SK-N-SH (cell line): ENCODE measurements at regions of chr20 and their contacts with region 1.

Region 1: GRCh38 chr20:41095110-41095969 is 42.0 kb upstream of the PLCG1 start:
- DNase-seq: peak; percentile 58
- H3K4me3 ChIP-seq: no peak overlapping the region
- H3K27ac ChIP-seq: no peak overlapping the region
- H3K4me1 ChIP-seq: peaks cover 9 to 12% of the 10 kb centered on the region in 2 experiments
- H3K27me3 ChIP-seq: no peaks in the 10 kb centered on the region
- CTCF ChIP-seq: peak; percentile 96
- EP300 ChIP-seq: no peak
- RAD21 ChIP-seq: peak; percentile 89

Region 2: DNA sequence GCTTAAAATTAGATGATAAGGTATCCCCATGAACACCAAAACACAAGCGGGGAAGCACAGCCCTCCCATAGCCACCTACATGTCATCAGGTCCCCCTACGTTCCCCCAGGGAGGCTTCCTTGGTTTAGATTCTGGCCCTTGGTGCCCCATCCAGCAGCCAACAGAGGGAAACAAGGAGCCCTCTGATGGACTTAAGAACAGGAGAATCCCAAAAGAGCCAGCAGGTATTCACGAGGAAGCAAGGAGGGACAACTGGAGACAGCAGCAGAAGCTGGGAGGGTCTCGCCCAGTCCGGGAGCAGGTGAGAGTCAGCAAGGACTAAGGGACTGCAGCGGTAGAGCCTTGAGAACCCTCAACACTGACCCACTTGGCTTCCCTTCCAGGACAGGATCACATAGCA is 125.1 kb before region 1 on chr20:
- CTCF ChIA-PET with region 1: interaction called, 34 read pairs
- POLR2A ChIA-PET with region 1: no interaction called
- DNase-seq: no peak
- H3K4me3 ChIP-seq: no peak overlapping the region
- H3K27ac ChIP-seq: no peak overlapping the region
- H3K4me1 ChIP-seq: peaks cover 0 to 2% of the 10 kb centered on the region in 2 experiments; a peak in 1 of 4 replicates
- H3K27me3 ChIP-seq: no peaks in the 10 kb centered on the region
- CTCF ChIP-seq: no peak
- EP300 ChIP-seq: no peak
- RAD21 ChIP-seq: no peak

Region 3: GRCh38 chr20:40980106-40980827 is 115.1 kb before region 1 on chr20:
- CTCF ChIA-PET with region 1: interaction called, 17 read pairs
- POLR2A ChIA-PET with region 1: no interaction called
- DNase-seq: no peak
- H3K4me3 ChIP-seq: no peak overlapping the region
- H3K27ac ChIP-seq: no peak overlapping the region
- H3K4me1 ChIP-seq: no peaks in the 10 kb centered on the region
- H3K27me3 ChIP-seq: no peaks in the 10 kb centered on the region
- CTCF ChIP-seq: no peak
- EP300 ChIP-seq: no peak
- RAD21 ChIP-seq: no peak

Region 4: DNA sequence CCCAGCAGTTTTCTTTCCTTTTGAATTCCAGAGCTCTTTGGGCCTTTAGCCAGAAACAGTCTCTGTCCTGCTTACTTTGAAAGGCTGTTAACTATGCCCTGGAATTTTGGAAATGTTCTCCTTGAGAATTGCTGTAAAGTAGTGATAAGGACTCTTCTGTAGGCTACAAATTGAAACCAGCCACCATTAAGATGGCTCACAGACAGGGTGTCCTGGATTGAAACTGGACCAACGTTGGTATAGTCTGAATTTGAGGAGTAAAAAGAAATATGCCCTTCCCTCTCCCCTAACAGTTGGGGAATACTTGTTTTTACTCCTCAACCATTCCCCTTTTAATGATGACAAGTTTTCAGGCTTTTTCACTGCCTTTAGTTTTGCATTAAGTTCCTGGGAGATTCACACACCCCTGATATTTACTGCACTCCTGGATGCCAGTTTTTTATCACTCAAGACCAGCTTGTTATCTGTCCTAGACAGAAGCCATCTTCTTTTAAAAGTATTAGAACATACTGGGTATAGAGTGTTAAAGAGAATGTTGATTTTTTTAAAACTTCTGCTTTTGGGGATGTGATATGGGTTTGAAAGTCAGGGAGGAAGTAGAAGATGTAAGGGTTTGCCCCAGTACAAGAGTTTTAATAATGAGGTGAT is 44.9 kb before region 1 on chr20:
- CTCF ChIA-PET with region 1: interaction called, 11 read pairs
- POLR2A ChIA-PET with region 1: no interaction called
- DNase-seq: no peak
- H3K4me3 ChIP-seq: no peak overlapping the region
- H3K27ac ChIP-seq: peak overlapping the region; percentile 61 to 67; a peak in 3 of 4 replicates
- H3K4me1 ChIP-seq: peaks cover 21 to 69% of the 10 kb centered on the region in 2 experiments; a peak in 3 of 4 replicates
- H3K27me3 ChIP-seq: no peaks in the 10 kb centered on the region
- CTCF ChIP-seq: no peak
- EP300 ChIP-seq: no peak
- RAD21 ChIP-seq: no peak